ENCODE measurements at regions of chr17 and their contacts with region 1.

Region 1: GRCh38 chr17:66547117-66547865 is 244.9 kb downstream of the PRKCA start:
- DNase-seq: no peak
- H3K4me3 Mint-ChIP-seq: no peak overlapping the region
- H3K27ac Mint-ChIP-seq: peak overlapping the region; percentile 46
- H3K4me1 Mint-ChIP-seq: peaks cover 53% of the 10 kb centered on the region
- H3K27me3 Mint-ChIP-seq: no peaks in the 10 kb centered on the region

Region 2: DNA sequence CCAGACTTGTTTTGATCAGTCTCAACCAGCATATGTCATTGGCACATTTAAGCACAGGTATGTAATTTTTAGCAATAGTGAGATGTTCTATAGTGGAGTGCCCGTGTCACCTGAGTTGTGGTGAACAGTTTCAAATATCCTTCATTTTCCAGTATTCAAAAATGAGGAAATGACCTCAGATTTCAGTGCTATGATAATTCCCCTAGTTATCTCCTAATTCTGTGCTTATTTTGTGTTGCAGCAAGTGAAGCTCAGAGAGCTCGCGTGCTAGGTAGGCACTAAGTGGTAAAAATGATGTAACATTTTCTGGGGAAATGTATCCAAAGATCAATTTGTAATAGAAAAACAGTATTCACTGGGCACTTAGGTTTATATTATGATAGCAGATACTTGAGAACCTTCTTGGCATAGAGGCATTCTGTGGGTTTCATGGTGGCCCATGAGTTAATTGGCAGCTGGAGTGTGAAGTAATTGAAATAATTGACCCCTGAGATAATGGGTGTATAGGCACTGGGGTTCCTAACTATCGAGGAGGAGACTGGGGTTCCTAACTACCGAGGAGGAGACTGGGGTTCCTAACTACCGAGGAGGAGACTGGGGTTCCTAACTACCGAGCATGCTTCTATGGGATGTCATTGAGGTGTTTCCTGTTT is 85.8 kb before region 1 on chr17:
- CTCF ChIA-PET with region 1: no interaction called
- intact Hi-C with region 1: no loop called
- DNase-seq: no peak
- H3K4me3 Mint-ChIP-seq: no peak overlapping the region
- H3K27ac Mint-ChIP-seq: no peak overlapping the region
- H3K4me1 Mint-ChIP-seq: peaks cover 60% of the 10 kb centered on the region
- H3K27me3 Mint-ChIP-seq: no peaks in the 10 kb centered on the region

Region 3: GRCh38 chr17:66508896-66509843 is 38.1 kb before region 1 on chr17:
- CTCF ChIA-PET with region 1: no interaction called
- intact Hi-C with region 1: loop called (anchors 1 kb)
- DNase-seq: peak; percentile 79
- H3K4me3 Mint-ChIP-seq: peak overlapping the region; percentile 39
- H3K27ac Mint-ChIP-seq: peak overlapping the region; percentile 90
- H3K4me1 Mint-ChIP-seq: peaks cover 85% of the 10 kb centered on the region
- H3K27me3 Mint-ChIP-seq: no peaks in the 10 kb centered on the region